MCF 10A (cell line): ENCODE measurements at regions of chr5 and their contacts with region 1.

Region 1: GRCh38 chr5:56270568-56271392 is 37.6 kb upstream of the ANKRD55 start:
- DNase-seq: peak; percentile 85
- H3K4me3 Mint-ChIP-seq: no peak overlapping the region
- H3K27ac Mint-ChIP-seq: no peak overlapping the region
- H3K4me1 Mint-ChIP-seq: peaks cover 5% of the 10 kb centered on the region
- H3K27me3 Mint-ChIP-seq: no peaks in the 10 kb centered on the region
- CTCF ChIP-seq: peak; percentile 98

Region 2: DNA sequence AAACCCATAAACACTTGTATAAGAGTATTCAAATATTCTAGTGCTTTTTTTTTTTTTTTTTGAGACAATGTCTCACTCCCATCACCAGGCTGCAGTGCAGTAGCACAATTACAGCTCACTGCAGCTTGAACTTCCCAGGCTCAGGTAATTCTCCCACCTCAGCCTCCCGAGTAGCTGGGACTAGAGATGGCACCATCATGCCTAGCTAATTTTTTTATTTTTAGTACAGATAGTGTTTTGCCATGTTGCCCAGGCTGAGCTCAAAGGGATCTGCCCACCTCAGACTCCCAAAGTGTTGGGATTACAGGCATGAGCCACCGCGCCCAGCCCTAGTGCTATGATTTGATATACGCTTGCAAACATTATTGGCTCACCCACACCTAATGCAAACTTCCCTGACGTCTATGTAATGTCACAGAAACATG is 287.8 kb before region 1 on chr5:
- CTCF ChIA-PET with region 1: interaction called, 5 read pairs
- POLR2A ChIA-PET with region 1: no interaction called
- intact Hi-C with region 1: loop called (anchors 5 kb)
- DNase-seq: peak; percentile 26
- H3K4me3 Mint-ChIP-seq: no peak overlapping the region
- H3K27ac Mint-ChIP-seq: no peak overlapping the region
- H3K4me1 Mint-ChIP-seq: peaks cover 5% of the 10 kb centered on the region
- H3K27me3 Mint-ChIP-seq: no peaks in the 10 kb centered on the region
- CTCF ChIP-seq: peak; percentile 26

Region 3: GRCh38 chr5:56080375-56081052 is 190.3 kb before region 1 on chr5:
- CTCF ChIA-PET with region 1: no interaction called
- POLR2A ChIA-PET with region 1: no interaction called
- intact Hi-C with region 1: no loop called
- DNase-seq: no peak
- H3K4me3 Mint-ChIP-seq: no peak overlapping the region
- H3K27ac Mint-ChIP-seq: peak overlapping the region; percentile 59
- H3K4me1 Mint-ChIP-seq: peaks cover 20% of the 10 kb centered on the region
- H3K27me3 Mint-ChIP-seq: no peaks in the 10 kb centered on the region
- CTCF ChIP-seq: no peak

Region 4: GRCh38 chr5:56328753-56329560 is 58.2 kb after region 1 on chr5:
- CTCF ChIA-PET with region 1: interaction called, 19 read pairs
- POLR2A ChIA-PET with region 1: no interaction called
- intact Hi-C with region 1: no loop called
- DNase-seq: peak; percentile 63
- H3K4me3 Mint-ChIP-seq: no peak overlapping the region
- H3K27ac Mint-ChIP-seq: peak overlapping the region; percentile 84
- H3K4me1 Mint-ChIP-seq: peaks cover 24% of the 10 kb centered on the region
- H3K27me3 Mint-ChIP-seq: no peaks in the 10 kb centered on the region
- CTCF ChIP-seq: no peak

Region 5: GRCh38 chr5:56356836-56357160 is 86.0 kb after region 1 on chr5:
- CTCF ChIA-PET with region 1: no interaction called
- POLR2A ChIA-PET with region 1: no interaction called
- intact Hi-C with region 1: no loop called
- DNase-seq: no peak
- H3K4me3 Mint-ChIP-seq: no peak overlapping the region
- H3K27ac Mint-ChIP-seq: no peak overlapping the region
- H3K4me1 Mint-ChIP-seq: peaks cover 12% of the 10 kb centered on the region
- H3K27me3 Mint-ChIP-seq: no peaks in the 10 kb centered on the region
- CTCF ChIP-seq: no peak

Region 6: GRCh38 chr5:56838409-56839039 is 567.7 kb after region 1 on chr5:
- CTCF ChIA-PET with region 1: interaction called, 422 read pairs
- POLR2A ChIA-PET with region 1: interaction called, 34 read pairs
- intact Hi-C with region 1: loop called (anchors 1 kb)
- DNase-seq: peak; percentile 63
- H3K4me3 Mint-ChIP-seq: peak overlapping the region; percentile 41
- H3K27ac Mint-ChIP-seq: peak overlapping the region; percentile 73
- H3K4me1 Mint-ChIP-seq: peaks cover 32% of the 10 kb centered on the region
- H3K27me3 Mint-ChIP-seq: no peaks in the 10 kb centered on the region
- CTCF ChIP-seq: peak; percentile 74

Region 7: DNA sequence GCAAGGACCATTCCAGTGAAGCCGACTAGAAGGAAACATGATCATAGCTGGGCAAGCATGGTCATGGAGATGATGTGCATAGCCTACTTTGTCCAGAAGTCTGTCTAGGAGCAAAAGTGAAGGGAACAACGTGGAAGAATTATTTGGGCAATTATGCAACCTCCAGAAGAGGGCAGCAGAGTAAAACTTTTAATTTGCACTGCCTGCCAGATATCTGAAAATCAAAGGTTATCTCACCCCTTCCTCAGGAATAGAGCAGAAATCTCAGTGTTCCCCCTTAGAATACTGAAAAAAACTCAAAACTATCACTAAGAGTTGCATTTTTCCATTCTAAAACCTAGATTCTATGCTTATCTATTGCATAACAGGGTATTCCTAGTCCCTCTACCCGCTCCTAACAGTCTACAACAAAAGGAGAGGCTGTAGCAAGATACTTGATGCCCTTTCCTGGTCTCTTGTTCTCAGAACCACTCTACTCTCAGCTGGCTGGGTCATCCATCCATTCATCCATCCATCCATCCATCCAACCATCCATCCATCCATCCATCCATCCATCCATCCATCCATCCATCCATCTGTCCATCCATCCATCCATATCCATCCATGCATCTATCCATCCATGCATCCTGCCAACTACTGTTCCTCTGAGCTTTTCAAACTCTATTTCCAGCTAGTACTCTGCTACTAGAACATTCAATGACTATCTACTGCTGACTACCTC is 630.2 kb after region 1 on chr5:
- CTCF ChIA-PET with region 1: interaction called, 26 read pairs
- POLR2A ChIA-PET with region 1: no interaction called
- intact Hi-C with region 1: loop called (anchors 1 kb)
- DNase-seq: peak; percentile 63
- H3K4me3 Mint-ChIP-seq: no peak overlapping the region
- H3K27ac Mint-ChIP-seq: no peak overlapping the region
- H3K4me1 Mint-ChIP-seq: no peaks in the 10 kb centered on the region
- H3K27me3 Mint-ChIP-seq: no peaks in the 10 kb centered on the region
- CTCF ChIP-seq: peak; percentile 78

Region 8: GRCh38 chr5:57277085-57277484 is 1006.3 kb after region 1 on chr5:
- CTCF ChIA-PET with region 1: no interaction called
- POLR2A ChIA-PET with region 1: no interaction called
- intact Hi-C with region 1: loop called (anchors 1 kb)
- DNase-seq: peak; percentile 35
- H3K4me3 Mint-ChIP-seq: no peak overlapping the region
- H3K27ac Mint-ChIP-seq: no peak overlapping the region
- H3K4me1 Mint-ChIP-seq: no peaks in the 10 kb centered on the region
- H3K27me3 Mint-ChIP-seq: no peaks in the 10 kb centered on the region
- CTCF ChIP-seq: peak; percentile 26